K562 (cell line): ENCODE measurements at regions of chr3 and their contacts with region 1.

Region 1: GRCh38 chr3:67377299-67377698 is 277.1 kb downstream of the SUCLG2 start:
- DNase-seq: no peak
- ATAC-seq: peak; percentile 65
- H3K4me3 ChIP-seq: no peak overlapping the region
- H3K27ac ChIP-seq: no peak overlapping the region
- H3K4me1 ChIP-seq: no peaks in the 10 kb centered on the region
- H3K27me3 ChIP-seq: no peaks in the 10 kb centered on the region
- CTCF ChIP-seq: no peak
- EP300 ChIP-seq: no peak
- POLR2A ChIP-seq: no peak
- RAD21 ChIP-seq: no peak

Region 2: GRCh38 chr3:66625505-66626216 is 751.6 kb before region 1 on chr3:
- CTCF ChIA-PET with region 1: no interaction called
- POLR2A ChIA-PET with region 1: no interaction called
- in situ Hi-C with region 1: no loop called
- intact Hi-C with region 1: no loop called
- DNase-seq: no peak
- ATAC-seq: no peak
- H3K4me3 ChIP-seq: no peak overlapping the region
- H3K27ac ChIP-seq: no peak overlapping the region
- H3K4me1 ChIP-seq: no peaks in the 10 kb centered on the region
- H3K27me3 ChIP-seq: no peaks in the 10 kb centered on the region
- CTCF ChIP-seq: no peak
- EP300 ChIP-seq: no peak
- POLR2A ChIP-seq: no peak
- RAD21 ChIP-seq: no peak

Region 3: GRCh38 chr3:67526246-67526645 is 148.9 kb after region 1 on chr3:
- CTCF ChIA-PET with region 1: no interaction called
- POLR2A ChIA-PET with region 1: no interaction called
- in situ Hi-C with region 1: no loop called
- intact Hi-C with region 1: no loop called
- DNase-seq: no peak
- ATAC-seq: no peak
- H3K4me3 ChIP-seq: no peak overlapping the region
- H3K27ac ChIP-seq: no peak overlapping the region
- H3K4me1 ChIP-seq: no peaks in the 10 kb centered on the region
- H3K27me3 ChIP-seq: no peaks in the 10 kb centered on the region
- CTCF ChIP-seq: no peak
- EP300 ChIP-seq: no peak
- POLR2A ChIP-seq: no peak
- RAD21 ChIP-seq: no peak

Region 4: DNA sequence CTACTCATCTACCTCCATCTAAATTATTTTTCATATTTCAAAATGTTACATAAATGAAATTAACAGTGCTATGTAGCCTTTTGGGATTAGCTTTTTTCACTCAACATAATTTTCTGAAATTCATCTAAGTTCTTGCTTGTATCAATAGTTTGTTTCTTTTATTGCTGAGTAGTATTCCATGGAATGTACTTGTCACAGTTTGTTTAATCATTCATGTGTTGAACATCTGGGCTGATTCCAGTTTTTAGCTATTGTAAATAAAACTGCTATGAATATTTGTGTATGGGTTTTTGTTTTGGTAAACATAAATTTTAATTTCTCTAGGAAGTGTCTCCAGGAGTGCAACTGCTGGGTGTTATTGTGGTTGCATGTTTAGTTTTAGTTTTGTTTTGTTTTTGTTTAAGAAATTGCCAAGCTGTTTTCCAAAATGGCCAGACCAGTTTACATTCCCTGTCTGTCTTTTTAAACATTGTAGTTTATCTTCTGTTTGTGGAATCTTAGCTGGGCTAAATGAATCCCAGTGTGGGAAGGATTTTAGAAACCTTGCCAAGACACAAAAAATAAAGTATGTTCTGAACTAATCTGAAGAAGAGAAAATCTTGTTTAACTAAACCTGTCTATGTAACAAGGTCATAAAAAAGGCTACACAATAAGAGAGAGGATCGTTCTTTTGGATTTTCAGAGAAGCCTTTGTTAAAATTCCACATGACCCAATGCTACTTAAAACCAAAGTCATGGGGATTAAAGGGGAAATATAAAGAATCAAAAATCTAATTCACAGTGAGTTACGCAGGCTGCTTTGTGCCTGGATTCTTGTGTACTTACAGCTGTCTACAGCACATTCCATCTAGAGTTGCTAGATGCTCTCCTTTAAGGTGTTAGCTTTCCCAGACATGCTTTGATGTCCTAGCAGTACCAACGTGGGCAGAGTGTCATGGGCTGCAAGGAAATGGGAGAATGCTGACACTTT is 406.3 kb after region 1 on chr3:
- CTCF ChIA-PET with region 1: no interaction called
- POLR2A ChIA-PET with region 1: no interaction called
- in situ Hi-C with region 1: loop called (anchors 10 kb)
- intact Hi-C with region 1: no loop called
- DNase-seq: no peak
- ATAC-seq: no peak
- H3K4me3 ChIP-seq: no peak overlapping the region
- H3K27ac ChIP-seq: no peak overlapping the region
- H3K4me1 ChIP-seq: no peaks in the 10 kb centered on the region; a peak in 1 of 5 replicates
- H3K27me3 ChIP-seq: no peaks in the 10 kb centered on the region
- CTCF ChIP-seq: no peak
- EP300 ChIP-seq: no peak
- POLR2A ChIP-seq: no peak
- RAD21 ChIP-seq: no peak